ENCODE measurements at regions of chr3 and their contacts with region 1.

Region 1: DNA sequence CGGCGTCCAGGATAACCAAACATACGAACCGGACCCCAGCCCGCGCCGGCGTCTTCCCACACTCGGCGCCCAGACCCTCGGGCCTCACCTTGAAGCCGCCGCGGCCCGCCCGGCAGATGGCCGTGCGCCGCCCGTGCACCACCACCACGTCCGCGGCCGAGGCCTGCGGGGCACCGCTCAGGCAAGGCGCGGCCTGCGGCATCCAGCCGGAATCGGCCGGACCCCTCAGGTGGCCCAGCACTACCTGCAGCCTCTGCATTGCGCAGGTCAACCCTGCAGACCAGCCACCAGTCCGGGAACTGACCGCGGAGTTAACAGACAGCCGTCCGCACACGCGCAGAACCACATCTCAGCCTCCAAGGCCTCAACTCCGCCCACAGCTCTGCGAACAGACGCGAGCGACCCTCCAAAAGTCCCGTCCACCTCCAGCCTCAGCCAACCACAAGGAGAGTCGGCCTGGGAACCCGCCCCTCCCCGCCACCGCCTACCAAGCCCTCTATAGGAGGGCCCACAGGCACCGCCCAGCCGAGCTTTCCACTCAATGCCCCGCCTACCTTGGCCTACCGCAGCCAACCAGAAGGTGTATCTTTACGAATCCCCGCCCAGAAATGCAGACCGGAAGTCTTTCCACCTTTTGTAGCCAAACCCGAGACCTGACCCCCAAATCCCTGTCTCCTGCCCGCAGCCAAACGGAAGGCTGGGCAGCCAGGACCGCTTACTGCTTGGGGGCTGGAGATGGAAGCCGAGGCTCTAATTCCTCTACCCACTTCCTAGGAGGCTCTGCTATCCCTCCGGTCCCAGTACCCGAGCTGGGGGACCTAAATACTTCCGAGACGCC is at the start of gene ACAA1:
- DNase-seq: peak; percentile 100
- ATAC-seq: peak; percentile 91 to 95
- H3K4me3 ChIP-seq: peak within 1 kb of the TSS; percentile 73 to 99 (median 82)
- H3K27ac ChIP-seq: peak within 1 kb of the TSS; percentile 88 to 97 (median 92)
- H3K4me1 ChIP-seq: peaks cover 19 to 30% of the 10 kb centered on the region in 2 donors
- H3K27me3 ChIP-seq: no peaks in the 10 kb centered on the region
- CTCF ChIP-seq: peak in 1 of 5 experiments; percentile 8
- POLR2A ChIP-seq: peak; percentile 70 to 89
- total RNA-seq, gene ACAA1: 24.5 to 31.2 (median 29.3) TPM

Region 2: GRCh38 chr3:37855363-37855970 is 281.5 kb before region 1 on chr3:
- in situ Hi-C with region 1: no loop called
- intact Hi-C with region 1: loop called (anchors 5 kb)
- DNase-seq: peak; percentile 40 to 67
- ATAC-seq: peak in 1 of 2 donors; percentile 61
- H3K4me3 ChIP-seq: no peak overlapping the region
- H3K27ac ChIP-seq: no peak overlapping the region
- H3K4me1 ChIP-seq: peaks cover 0 to 3% of the 10 kb centered on the region in 2 donors
- H3K27me3 ChIP-seq: no peaks in the 10 kb centered on the region
- CTCF ChIP-seq: peak; percentile 77 to 93 (median 89)
- POLR2A ChIP-seq: no peak

Region 3: DNA sequence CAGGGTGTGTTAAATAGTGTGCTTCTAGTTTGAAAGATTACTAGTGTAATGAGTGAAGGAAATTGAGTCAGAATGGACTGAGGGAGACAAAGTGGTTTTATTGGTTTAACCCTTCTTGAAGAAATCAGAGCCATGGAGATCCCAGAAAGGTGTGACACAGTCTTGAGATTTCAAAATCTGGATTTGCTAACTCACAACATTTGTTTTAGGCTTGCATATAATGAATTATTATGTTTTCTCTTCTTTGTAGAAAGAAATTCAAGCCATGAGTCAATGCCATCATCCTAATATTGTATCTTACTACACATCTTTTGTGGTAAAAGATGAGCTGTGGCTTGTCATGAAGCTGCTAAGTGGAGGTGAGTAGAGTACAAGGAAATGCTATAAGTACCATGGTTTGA is 53.5 kb after region 1 on chr3:
- in situ Hi-C with region 1: no loop called
- intact Hi-C with region 1: no loop called
- DNase-seq: no peak
- ATAC-seq: no peak
- H3K4me3 ChIP-seq: no peak overlapping the region
- H3K27ac ChIP-seq: no peak overlapping the region
- H3K4me1 ChIP-seq: no peaks in the 10 kb centered on the region
- H3K27me3 ChIP-seq: no peaks in the 10 kb centered on the region
- CTCF ChIP-seq: no peak
- POLR2A ChIP-seq: no peak

Region 4: GRCh38 chr3:38247366-38248035 is 110.5 kb after region 1 on chr3:
- in situ Hi-C with region 1: no loop called
- intact Hi-C with region 1: loop called (anchors 1 kb)
- DNase-seq: peak; percentile 23 to 34
- ATAC-seq: peak; percentile 99
- H3K4me3 ChIP-seq: no peak overlapping the region
- H3K27ac ChIP-seq: peak overlapping the region; percentile 6 to 64 (median 40)
- H3K4me1 ChIP-seq: peaks cover 5 to 10% of the 10 kb centered on the region in 2 donors
- H3K27me3 ChIP-seq: no peaks in the 10 kb centered on the region
- CTCF ChIP-seq: peak in 2 of 5 experiments; percentile 10 to 26
- POLR2A ChIP-seq: no peak

Region 5: DNA sequence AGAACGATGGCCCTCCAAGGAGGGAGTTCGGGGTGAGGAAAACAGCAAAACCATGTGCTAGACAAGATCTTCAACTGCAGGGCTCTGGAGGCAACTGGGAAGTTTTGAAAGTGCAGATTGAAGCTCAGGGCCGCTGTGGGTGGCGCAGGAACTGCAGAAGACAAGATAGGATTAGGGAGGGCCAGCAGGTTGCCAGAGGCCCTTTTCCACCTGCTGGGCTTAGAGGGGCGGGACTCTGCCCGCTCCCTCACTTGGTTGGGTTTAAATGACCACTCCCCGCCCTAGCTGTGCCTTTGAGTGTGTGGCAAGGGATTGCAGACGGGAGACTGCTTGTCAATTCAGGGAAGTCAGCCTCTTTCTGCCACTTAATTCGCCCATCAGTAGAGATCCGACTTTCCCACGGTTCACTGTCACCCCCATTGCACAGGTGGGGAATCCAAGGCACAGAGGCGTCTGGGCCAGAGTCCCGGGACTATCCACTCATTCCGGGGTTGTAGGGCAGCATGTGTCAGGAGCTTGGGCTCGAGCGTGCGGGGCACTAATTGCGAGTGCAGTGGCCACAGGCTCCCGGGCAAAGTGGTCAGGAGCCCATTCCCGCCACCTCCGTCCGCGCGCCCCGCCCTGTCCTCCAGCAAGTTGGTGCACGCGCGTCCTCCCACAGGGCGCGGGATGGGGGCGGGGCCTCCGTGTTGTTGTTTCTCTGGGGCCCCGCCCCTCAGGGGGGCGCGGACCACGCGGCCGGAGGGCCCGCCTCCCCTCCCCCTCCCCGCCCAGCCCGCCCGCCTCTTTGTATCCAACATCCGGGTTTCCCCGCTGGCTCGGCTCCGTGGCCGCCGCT is 316.3 kb after region 1 on chr3 and contains the start of gene ACVR2B:
- in situ Hi-C with region 1: no loop called
- intact Hi-C with region 1: loop called (anchors 10 kb)
- DNase-seq: peak; percentile 85 to 86
- ATAC-seq: peak; percentile 43
- H3K4me3 ChIP-seq: peak within 1 kb of the TSS; percentile 73 to 92 (median 79)
- H3K27ac ChIP-seq: peak within 1 kb of the TSS; percentile 96 to 98 (median 97)
- H3K4me1 ChIP-seq: peaks cover 23 to 29% of the 10 kb centered on the region in 2 donors
- H3K27me3 ChIP-seq: no peaks in the 10 kb centered on the region
- CTCF ChIP-seq: peak in 1 of 5 experiments; percentile 14
- POLR2A ChIP-seq: peak in 1 of 2 donors; percentile 69
- total RNA-seq, gene ACVR2B: 2.4 to 12.1 (median 6.3) TPM

Region 6: GRCh38 chr3:38496131-38496910 is 359.3 kb after region 1 on chr3 and contains the start of gene EXOG:
- in situ Hi-C with region 1: loop called in 3 of 4 experiments (anchors 25 kb)
- intact Hi-C with region 1: no loop called
- DNase-seq: peak; percentile 88 to 89
- ATAC-seq: peak; percentile 87 to 94
- H3K4me3 ChIP-seq: peak within 1 kb of the TSS; percentile 62 to 87 (median 81)
- H3K27ac ChIP-seq: peak within 1 kb of the TSS; percentile 57 to 81 (median 72)
- H3K4me1 ChIP-seq: peaks cover 23 to 35% of the 10 kb centered on the region in 2 donors
- H3K27me3 ChIP-seq: no peaks in the 10 kb centered on the region
- CTCF ChIP-seq: peak; percentile 31 to 95 (median 71)
- POLR2A ChIP-seq: no peak
- total RNA-seq, gene EXOG: 1.6 to 6.5 (median 2.2) TPM